ENCODE measurements at regions of chr7 and their contacts with region 1.

Region 1: GRCh38 chr7:44240983-44241510 is 40.3 kb downstream of the YKT6 start:
- DNase-seq: peak; percentile 80 to 89 (median 86)
- ATAC-seq: peak; percentile 96
- H3K4me3 ChIP-seq: no peak overlapping the region
- H3K27ac ChIP-seq: peak overlapping the region in 2 of 4 donors; percentile 33
- H3K4me1 ChIP-seq: peaks cover 6% of the 10 kb centered on the region
- H3K27me3 ChIP-seq: no peaks in the 10 kb centered on the region
- CTCF ChIP-seq: peak; percentile 58 to 80 (median 75)
- POLR2A ChIP-seq: peak in 1 of 3 donors; percentile 28

Region 2: GRCh38 chr7:44097064-44097932 is 143.7 kb before region 1 on chr7:
- intact Hi-C with region 1: no loop called
- DNase-seq: no peak
- ATAC-seq: no peak
- H3K4me3 ChIP-seq: no peak overlapping the region
- H3K27ac ChIP-seq: no peak overlapping the region
- H3K4me1 ChIP-seq: no peaks in the 10 kb centered on the region
- H3K27me3 ChIP-seq: no peaks in the 10 kb centered on the region
- CTCF ChIP-seq: no peak
- POLR2A ChIP-seq: no peak

Region 3: DNA sequence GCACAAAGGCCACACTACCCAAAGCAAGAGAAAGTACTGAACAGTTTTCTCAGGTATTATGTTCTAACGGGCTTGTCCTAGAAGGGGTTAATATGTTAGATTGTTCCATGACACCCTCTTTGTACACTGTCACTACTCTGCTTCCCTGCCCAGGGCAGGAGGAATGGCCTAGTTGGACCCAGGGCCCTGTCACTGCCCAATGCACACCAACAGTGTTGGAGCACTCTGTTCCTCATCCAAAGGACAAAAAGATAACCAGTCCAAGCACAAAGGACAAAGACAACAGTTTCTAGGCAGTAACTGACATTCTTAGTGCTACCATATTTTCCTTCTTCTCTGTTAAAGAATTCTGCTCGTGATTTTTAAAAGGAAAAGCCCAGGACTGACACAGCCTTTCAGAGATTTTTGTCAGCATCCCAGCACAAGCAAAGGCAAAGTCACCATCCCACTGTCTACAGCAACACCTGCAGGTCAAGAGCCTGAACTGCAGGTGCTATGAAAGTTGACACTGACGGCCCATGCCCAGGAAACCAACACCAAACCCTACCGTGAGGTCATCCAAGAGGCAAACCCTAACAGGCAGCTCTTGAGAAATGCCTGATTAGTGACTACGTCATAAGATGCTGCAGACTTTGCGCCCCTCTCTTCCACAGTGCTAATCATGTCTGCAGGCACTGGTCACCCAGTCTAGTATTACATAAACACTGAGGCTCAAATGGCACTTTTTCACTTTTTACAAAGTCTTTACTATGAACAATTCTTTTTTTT is 236.2 kb after region 1 on chr7:
- intact Hi-C with region 1: loop called (anchors 10 kb)
- DNase-seq: peak; percentile 48 to 67 (median 58)
- ATAC-seq: peak; percentile 94
- H3K4me3 ChIP-seq: no peak overlapping the region
- H3K27ac ChIP-seq: no peak overlapping the region
- H3K4me1 ChIP-seq: no peaks in the 10 kb centered on the region
- H3K27me3 ChIP-seq: no peaks in the 10 kb centered on the region
- CTCF ChIP-seq: peak; percentile 68 to 91 (median 86)
- POLR2A ChIP-seq: no peak

Region 4: DNA sequence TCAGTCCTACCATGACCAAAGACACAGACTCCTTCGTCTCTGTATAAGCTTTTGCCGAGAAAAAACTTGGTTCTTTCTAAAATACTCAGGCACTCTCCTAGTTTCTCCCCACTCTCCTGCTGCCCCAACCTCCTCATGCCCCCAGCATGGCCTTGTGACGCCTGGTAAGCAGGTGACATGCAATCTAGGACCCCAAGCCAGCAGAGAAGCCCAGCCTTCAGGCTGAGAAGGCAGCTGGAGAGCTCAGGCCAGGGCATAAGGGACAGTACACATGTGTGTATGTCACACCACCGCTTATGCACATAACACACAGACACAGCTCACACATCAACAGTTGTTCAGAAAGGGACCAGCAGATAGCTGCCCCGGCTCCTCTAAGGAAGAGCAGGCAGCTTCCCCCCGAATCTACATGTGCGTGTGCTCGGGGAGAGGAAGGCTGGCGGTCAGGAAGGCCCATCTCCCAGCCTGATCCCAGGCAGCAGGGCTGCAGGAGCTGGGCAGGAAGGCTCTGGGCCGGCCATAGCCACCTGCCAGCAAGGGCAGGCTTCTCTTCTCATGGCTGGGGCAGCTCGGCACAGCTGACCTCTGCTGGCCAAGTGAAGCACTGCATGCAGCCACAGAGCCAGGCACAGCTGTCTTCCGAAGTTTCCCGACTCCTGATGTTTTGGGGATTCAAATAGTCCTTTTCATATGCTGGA is 324.2 kb after region 1 on chr7:
- intact Hi-C with region 1: loop called (anchors 10 kb)
- DNase-seq: peak; percentile 70 to 78 (median 74)
- ATAC-seq: peak; percentile 86
- H3K4me3 ChIP-seq: no peak overlapping the region
- H3K27ac ChIP-seq: no peak overlapping the region
- H3K4me1 ChIP-seq: peaks cover 7% of the 10 kb centered on the region
- H3K27me3 ChIP-seq: no peaks in the 10 kb centered on the region
- CTCF ChIP-seq: peak; percentile 91 to 97 (median 92)
- POLR2A ChIP-seq: no peak